ENCODE measurements at regions of chr2 and their contacts with region 1.

Region 1: DNA sequence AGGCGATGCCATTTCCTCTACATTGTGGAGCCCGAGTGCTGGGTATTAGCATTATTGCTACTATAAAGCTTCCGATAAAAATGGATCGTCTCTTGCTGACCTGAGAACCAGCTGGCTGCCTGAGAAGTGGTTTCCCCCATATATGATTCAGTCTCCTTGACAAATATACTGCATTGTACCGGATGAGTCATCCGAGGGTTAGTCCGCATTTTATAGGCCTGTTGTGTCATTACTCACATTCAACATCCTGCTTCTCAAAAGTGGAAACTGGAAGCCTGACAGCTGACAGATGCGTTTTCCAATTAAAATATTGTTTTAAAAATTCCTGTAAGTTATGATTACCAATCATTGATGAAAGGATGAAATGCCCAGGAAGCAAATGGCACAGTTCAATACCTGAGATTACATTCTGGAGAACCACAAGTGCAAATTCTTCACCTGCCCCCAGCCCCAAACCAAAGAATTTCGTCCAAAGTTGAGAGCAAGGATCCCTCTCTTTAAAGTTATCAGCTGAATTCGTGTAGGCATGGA is 65.7 kb downstream of the SPRED2 start:
- DNase-seq: peak; percentile 11
- ATAC-seq: peak; percentile 53
- H3K4me3 ChIP-seq: no peak overlapping the region
- H3K27ac ChIP-seq: no peak overlapping the region; the same call in 1 of the 2 replicates
- H3K4me1 ChIP-seq: peaks cover 40% of the 10 kb centered on the region
- H3K27me3 ChIP-seq: no peaks in the 10 kb centered on the region
- CTCF ChIP-seq: no peak
- EP300 ChIP-seq: no peak
- POLR2A ChIP-seq: no peak
- RAD21 ChIP-seq: no peak

Region 2: GRCh38 chr2:65350684-65351083 is 16.0 kb before region 1 on chr2:
- CTCF ChIA-PET with region 1: interaction called, 7 read pairs
- POLR2A ChIA-PET with region 1: interaction called, 4 read pairs
- RAD21 ChIA-PET with region 1: interaction called, 3 read pairs
- SMC1A ChIA-PET with region 1: interaction called, 39 read pairs
- in situ Hi-C with region 1: no loop called
- intact Hi-C with region 1: no loop called
- DNase-seq: no peak
- ATAC-seq: peak; percentile 92
- H3K4me3 ChIP-seq: no peak overlapping the region
- H3K27ac ChIP-seq: peak overlapping the region; percentile 29; the same call in 1 of the 2 replicates
- H3K4me1 ChIP-seq: peaks cover 24% of the 10 kb centered on the region
- H3K27me3 ChIP-seq: no peaks in the 10 kb centered on the region
- CTCF ChIP-seq: peak; percentile 11 to 58 (median 45); a peak in 5 of 6 replicates
- EP300 ChIP-seq: no peak
- POLR2A ChIP-seq: no peak
- RAD21 ChIP-seq: peak; percentile 46

Region 3: DNA sequence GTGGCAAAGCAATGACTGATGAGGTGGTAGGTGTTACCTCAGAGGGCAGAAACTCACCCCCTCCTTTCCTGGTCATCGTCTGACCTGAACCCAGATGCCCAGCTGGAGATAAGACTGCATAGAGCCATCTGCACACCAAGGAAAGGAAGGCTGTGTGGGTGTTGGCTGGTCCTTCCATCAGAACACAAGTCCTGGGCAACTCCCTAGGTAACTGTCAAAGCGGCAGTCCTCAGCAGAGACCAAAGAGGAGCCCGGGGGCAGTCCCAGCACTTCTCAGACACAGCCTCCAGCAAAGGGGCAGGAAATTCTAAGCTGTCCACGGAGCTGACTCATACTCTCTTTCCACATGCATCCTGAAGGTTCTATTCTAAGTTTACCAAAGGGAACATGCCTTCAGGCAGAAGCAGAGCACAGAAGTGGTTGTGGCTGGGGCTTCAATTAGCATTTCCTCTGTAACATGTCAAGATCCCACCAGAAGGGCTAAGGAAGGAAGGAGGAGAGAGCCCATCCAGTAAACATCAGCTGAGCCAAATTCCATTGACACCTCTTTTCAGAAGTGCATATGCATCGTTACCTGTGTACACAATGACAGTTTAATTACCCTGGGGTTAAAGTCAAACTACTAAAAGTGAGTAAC is 11.0 kb after region 1 on chr2:
- CTCF ChIA-PET with region 1: interaction called, 16 read pairs
- POLR2A ChIA-PET with region 1: interaction called, 3 read pairs
- RAD21 ChIA-PET with region 1: interaction called, 8 read pairs
- SMC1A ChIA-PET with region 1: interaction called, 142 read pairs
- in situ Hi-C with region 1: no loop called
- intact Hi-C with region 1: no loop called
- DNase-seq: no peak
- ATAC-seq: peak; percentile 64
- H3K4me3 ChIP-seq: no peak overlapping the region
- H3K27ac ChIP-seq: no peak overlapping the region
- H3K4me1 ChIP-seq: peaks cover 29% of the 10 kb centered on the region
- H3K27me3 ChIP-seq: no peaks in the 10 kb centered on the region
- CTCF ChIP-seq: no peak
- EP300 ChIP-seq: no peak
- POLR2A ChIP-seq: no peak
- RAD21 ChIP-seq: no peak

Region 4: GRCh38 chr2:65382776-65383357 is 16.2 kb after region 1 on chr2:
- CTCF ChIA-PET with region 1: interaction called, 10 read pairs
- POLR2A ChIA-PET with region 1: interaction called, 4 read pairs
- RAD21 ChIA-PET with region 1: interaction called, 8 read pairs
- SMC1A ChIA-PET with region 1: interaction called, 80 read pairs
- in situ Hi-C with region 1: no loop called
- intact Hi-C with region 1: no loop called
- DNase-seq: no peak
- ATAC-seq: no peak
- H3K4me3 ChIP-seq: no peak overlapping the region
- H3K27ac ChIP-seq: peak overlapping the region; percentile 65
- H3K4me1 ChIP-seq: peaks cover 42% of the 10 kb centered on the region
- H3K27me3 ChIP-seq: no peaks in the 10 kb centered on the region
- CTCF ChIP-seq: peak in 1 of 3 experiments; percentile 37; a peak in 2 of 6 replicates
- EP300 ChIP-seq: no peak
- POLR2A ChIP-seq: no peak
- RAD21 ChIP-seq: peak; percentile 63

Region 5: GRCh38 chr2:65479524-65479923 is 112.9 kb after region 1 on chr2:
- CTCF ChIA-PET with region 1: no interaction called
- POLR2A ChIA-PET with region 1: no interaction called
- RAD21 ChIA-PET with region 1: no interaction called
- SMC1A ChIA-PET with region 1: no interaction called
- in situ Hi-C with region 1: no loop called
- intact Hi-C with region 1: no loop called
- DNase-seq: no peak
- ATAC-seq: no peak
- H3K4me3 ChIP-seq: no peak overlapping the region
- H3K27ac ChIP-seq: no peak overlapping the region
- H3K4me1 ChIP-seq: no peaks in the 10 kb centered on the region
- H3K27me3 ChIP-seq: peaks cover 0 to 2% of the 10 kb centered on the region in 2 experiments; a peak in 1 of 4 replicates
- CTCF ChIP-seq: no peak
- EP300 ChIP-seq: no peak
- POLR2A ChIP-seq: no peak
- RAD21 ChIP-seq: no peak

Measured in GM12878 (cell line).